HEK293 (cell line): ENCODE measurements at regions of chr16 and their contacts with region 1.

Region 1: GRCh38 chr16:79540825-79541595 is 59.5 kb downstream of the MAF start:
- H3K4me3 ChIP-seq: no peak overlapping the region
- H3K27ac ChIP-seq: no peak overlapping the region
- H3K4me1 ChIP-seq: no peaks in the 10 kb centered on the region
- CTCF ChIP-seq: no peak

Region 2: GRCh38 chr16:79171919-79172705 is 368.9 kb before region 1 on chr16:
- CTCF ChIA-PET with region 1: interaction called, 10 read pairs
- POLR2A ChIA-PET with region 1: no interaction called
- H3K4me3 ChIP-seq: no peak overlapping the region
- H3K27ac ChIP-seq: no peak overlapping the region
- H3K4me1 ChIP-seq: peaks cover 6% of the 10 kb centered on the region; the same call in 1 of the 2 replicates
- CTCF ChIP-seq: no peak